ENCODE measurements at regions of chr17 and their contacts with region 1.

Region 1: GRCh38 chr17:5438716-5439445 is at the start of gene C1QBP:
- DNase-seq: peak; percentile 65
- H3K4me3 ChIP-seq: peak within 1 kb of the TSS; percentile 56
- H3K27me3 ChIP-seq: no peaks in the 10 kb centered on the region
- CTCF ChIP-seq: peak; percentile 97
- polyA plus RNA-seq, gene C1QBP: 63.8 and 111 TPM in 2 replicates

Region 2: GRCh38 chr17:5249615-5250014 is 189.3 kb before region 1 on chr17:
- CTCF ChIA-PET with region 1: interaction called, 28 read pairs
- POLR2A ChIA-PET with region 1: no interaction called
- DNase-seq: peak; percentile 19
- H3K4me3 ChIP-seq: no peak overlapping the region
- H3K27me3 ChIP-seq: no peaks in the 10 kb centered on the region; the same call in 1 of the 2 replicates
- CTCF ChIP-seq: peak; percentile 66

Region 3: DNA sequence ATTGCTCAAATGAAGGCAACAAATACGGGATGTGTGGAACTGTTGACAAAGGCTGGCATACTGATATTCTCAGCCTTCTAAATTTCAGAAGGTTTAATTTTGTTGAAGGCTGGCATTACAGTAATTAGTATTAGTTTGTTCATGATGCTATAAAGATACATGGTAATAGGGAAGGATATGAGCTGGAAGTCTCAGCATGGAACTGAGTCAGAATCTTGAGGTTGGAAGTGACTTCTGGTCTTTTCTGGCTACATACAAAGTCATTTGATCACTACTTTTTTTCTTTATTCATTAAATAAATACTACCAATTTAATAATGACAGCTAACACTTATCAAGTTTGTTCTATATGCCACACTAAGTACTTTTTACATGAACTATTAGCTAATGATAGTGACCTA is 134.2 kb before region 1 on chr17:
- CTCF ChIA-PET with region 1: interaction called, 12 read pairs
- POLR2A ChIA-PET with region 1: no interaction called
- DNase-seq: no peak
- H3K4me3 ChIP-seq: no peak overlapping the region
- H3K27me3 ChIP-seq: no peaks in the 10 kb centered on the region
- CTCF ChIP-seq: no peak

Region 4: DNA sequence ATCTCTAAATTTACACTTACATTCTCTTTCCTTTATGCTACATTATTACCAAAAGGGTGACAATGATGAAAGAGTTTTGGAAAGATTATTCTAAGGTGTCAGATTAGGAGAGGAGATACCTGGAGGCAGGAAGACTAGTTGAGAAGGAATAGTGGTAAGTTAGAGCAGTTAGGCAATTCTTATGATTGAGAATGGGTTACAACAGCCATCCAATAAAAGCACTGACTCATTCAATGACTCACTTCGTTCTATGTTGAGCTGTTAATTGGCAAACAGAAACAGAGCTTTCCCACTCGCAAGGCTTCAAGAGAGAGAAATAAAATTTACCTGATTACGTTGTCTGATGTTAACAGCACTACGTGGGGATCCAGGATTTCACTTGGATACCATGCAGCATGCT is 25.2 kb before region 1 on chr17:
- CTCF ChIA-PET with region 1: interaction called, 15 read pairs
- POLR2A ChIA-PET with region 1: no interaction called
- DNase-seq: peak; percentile 87
- H3K4me3 ChIP-seq: no peak overlapping the region
- H3K27me3 ChIP-seq: no peaks in the 10 kb centered on the region
- CTCF ChIP-seq: no peak

Region 5: GRCh38 chr17:5422505-5422904 is 16.4 kb before region 1 on chr17:
- CTCF ChIA-PET with region 1: interaction called, 69 read pairs
- POLR2A ChIA-PET with region 1: interaction called, 4 read pairs
- DNase-seq: no peak
- H3K4me3 ChIP-seq: no peak overlapping the region
- H3K27me3 ChIP-seq: no peaks in the 10 kb centered on the region
- CTCF ChIP-seq: peak; percentile 23; the same call in 1 of the 2 replicates

Region 6: DNA sequence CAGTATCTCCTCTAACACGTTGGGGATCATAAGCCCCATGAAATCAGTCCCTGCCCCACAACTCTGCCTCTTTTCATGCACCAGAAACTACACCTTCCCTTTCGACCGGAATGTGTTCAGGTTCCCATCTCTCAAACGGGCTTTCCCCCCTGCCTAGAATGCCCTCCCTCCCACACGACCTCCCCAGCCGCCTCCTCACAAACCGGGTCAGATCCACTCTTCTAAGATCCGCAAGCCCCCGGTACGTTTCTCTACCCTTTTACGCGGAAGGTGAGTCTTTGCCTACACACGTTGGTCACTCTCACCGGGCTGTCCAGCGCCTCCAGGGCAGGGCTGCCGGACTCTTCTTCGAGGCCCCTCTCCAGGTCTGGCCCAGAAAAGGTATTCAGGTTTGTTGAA is 29.2 kb after region 1 on chr17:
- CTCF ChIA-PET with region 1: interaction called, 16 read pairs
- POLR2A ChIA-PET with region 1: no interaction called
- DNase-seq: no peak
- H3K4me3 ChIP-seq: peak overlapping the region; percentile 93
- H3K27me3 ChIP-seq: no peaks in the 10 kb centered on the region
- CTCF ChIP-seq: no peak

Region 7: DNA sequence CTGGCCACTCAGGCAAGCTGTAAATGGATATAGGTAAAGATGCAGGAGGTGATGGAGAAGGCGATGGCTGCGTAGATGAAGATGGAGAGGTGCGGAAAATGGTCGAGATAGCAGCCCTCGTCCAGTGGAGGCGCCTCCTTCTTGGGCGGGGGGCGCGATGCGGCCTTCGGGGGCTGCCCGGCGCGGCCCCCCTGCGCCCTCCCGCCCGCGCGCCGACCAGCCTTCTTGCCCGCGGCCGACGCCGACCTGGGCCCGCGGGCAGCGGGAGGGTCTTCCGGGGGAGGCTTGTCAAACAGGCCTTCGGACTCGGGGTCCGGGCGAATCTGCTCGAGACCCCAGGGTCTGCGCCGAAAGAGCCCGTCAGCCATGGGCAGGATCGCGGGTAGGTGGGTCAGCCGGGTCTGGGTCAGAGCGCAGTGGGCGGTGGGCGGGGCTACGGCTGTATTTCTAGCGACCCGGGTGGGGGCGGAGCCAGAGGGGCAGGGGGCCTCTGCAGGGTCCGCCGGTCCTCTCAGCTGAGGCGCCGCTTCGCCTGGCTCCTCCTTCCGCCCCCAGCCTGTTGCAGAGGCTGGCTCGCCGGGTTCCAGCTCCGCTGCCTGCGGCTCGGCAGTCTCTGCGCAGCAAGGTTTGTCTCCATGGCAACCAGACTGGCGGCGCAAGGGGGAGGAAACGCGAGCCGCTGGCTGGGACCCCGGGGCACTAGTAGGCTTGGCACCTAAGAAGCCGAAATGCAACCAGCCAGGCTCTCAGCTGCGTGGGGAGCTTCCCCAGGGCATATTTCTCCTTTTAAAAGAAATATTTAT is 61.9 kb after region 1 on chr17:
- CTCF ChIA-PET with region 1: interaction called, 12 read pairs
- POLR2A ChIA-PET with region 1: no interaction called
- DNase-seq: peak; percentile 53
- H3K4me3 ChIP-seq: peak overlapping the region; percentile 69
- H3K27me3 ChIP-seq: no peaks in the 10 kb centered on the region
- CTCF ChIP-seq: no peak